Caco-2 (cell line): ENCODE measurements at regions of chr1 and their contacts with region 1.

Region 1: DNA sequence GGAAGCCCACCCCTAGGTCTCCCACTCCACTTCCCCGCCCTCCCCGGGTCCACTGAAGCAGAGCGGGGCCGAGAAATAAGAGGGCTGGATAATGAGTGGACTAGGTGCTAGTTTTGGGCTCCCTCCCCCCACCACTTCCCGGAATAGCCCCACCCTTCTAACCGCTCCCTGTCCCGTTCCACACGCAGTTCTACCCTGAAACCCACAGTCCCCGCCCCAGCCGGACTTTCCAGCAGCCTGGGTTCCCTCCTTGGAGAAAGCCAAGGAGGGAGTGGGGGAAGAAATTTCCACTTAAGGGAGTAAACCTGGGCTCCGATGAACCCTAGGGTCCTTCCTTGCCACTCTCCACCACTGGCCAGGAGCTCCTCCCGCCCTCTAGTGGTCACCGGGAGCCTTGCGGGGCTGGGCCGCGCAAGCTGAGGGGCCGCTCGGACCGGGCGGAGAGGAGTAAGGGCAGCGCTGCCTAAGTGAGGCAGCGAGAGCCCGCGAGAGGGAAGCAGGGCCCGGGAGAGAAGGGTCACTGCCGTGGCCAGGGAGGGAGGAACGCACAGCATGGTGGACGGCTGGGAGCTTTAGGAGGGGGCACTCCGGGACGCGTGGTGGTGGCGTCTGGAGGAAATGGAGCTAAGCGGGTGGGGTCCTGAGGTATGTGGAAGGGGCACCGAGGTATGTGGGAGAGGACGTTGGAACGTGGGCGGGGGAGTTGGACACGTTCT is 14.3 kb downstream of the THBS3 start:
- DNase-seq: peak; percentile 91 to 96
- H3K4me3 ChIP-seq: peak overlapping the region; percentile 81
- H3K4me3 Mint-ChIP-seq: peak overlapping the region; percentile 98
- H3K27ac Mint-ChIP-seq: peak overlapping the region; percentile 98
- H3K4me1 ChIP-seq: peaks cover 4% of the 10 kb centered on the region; the same call in 1 of the 2 replicates
- H3K4me1 Mint-ChIP-seq: peaks cover 15% of the 10 kb centered on the region
- H3K27me3 ChIP-seq: no peaks in the 10 kb centered on the region
- H3K27me3 Mint-ChIP-seq: no peaks in the 10 kb centered on the region
- CTCF ChIP-seq: peak; percentile 97 to 99

Region 2: GRCh38 chr1:154442006-154442740 is 751.3 kb before region 1 on chr1:
- CTCF ChIA-PET with region 1: no interaction called
- POLR2A ChIA-PET with region 1: no interaction called
- intact Hi-C with region 1: no loop called
- DNase-seq: peak in 1 of 2 experiments; percentile 15
- H3K4me3 ChIP-seq: no peak overlapping the region
- H3K4me3 Mint-ChIP-seq: no peak overlapping the region
- H3K27ac Mint-ChIP-seq: no peak overlapping the region
- H3K4me1 ChIP-seq: peaks cover 5% of the 10 kb centered on the region
- H3K4me1 Mint-ChIP-seq: peaks cover 7% of the 10 kb centered on the region
- H3K27me3 ChIP-seq: no peaks in the 10 kb centered on the region
- H3K27me3 Mint-ChIP-seq: no peaks in the 10 kb centered on the region
- CTCF ChIP-seq: peak; percentile 33 to 39

Region 3: DNA sequence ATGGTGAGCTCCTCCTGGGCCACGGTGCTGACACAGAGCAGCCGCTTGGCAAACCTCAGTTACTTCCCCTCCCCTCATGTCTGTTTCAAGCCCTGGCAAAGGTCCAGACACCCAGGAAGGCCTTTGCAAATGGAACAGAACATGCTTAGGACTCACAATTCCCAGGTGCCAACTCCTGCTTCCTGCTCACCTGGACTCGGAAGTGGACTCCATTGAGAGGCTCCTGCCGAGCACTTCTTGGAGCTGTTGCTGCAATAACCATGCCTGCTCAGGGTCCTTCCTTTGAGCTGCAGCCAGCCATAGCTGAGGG is 170.6 kb before region 1 on chr1:
- CTCF ChIA-PET with region 1: no interaction called
- POLR2A ChIA-PET with region 1: no interaction called
- intact Hi-C with region 1: no loop called
- DNase-seq: no peak
- H3K4me3 ChIP-seq: no peak overlapping the region
- H3K4me3 Mint-ChIP-seq: no peak overlapping the region
- H3K27ac Mint-ChIP-seq: no peak overlapping the region
- H3K4me1 ChIP-seq: peaks cover 12% of the 10 kb centered on the region
- H3K4me1 Mint-ChIP-seq: peaks cover 32% of the 10 kb centered on the region
- H3K27me3 ChIP-seq: no peaks in the 10 kb centered on the region
- H3K27me3 Mint-ChIP-seq: no peaks in the 10 kb centered on the region
- CTCF ChIP-seq: no peak

Region 4: DNA sequence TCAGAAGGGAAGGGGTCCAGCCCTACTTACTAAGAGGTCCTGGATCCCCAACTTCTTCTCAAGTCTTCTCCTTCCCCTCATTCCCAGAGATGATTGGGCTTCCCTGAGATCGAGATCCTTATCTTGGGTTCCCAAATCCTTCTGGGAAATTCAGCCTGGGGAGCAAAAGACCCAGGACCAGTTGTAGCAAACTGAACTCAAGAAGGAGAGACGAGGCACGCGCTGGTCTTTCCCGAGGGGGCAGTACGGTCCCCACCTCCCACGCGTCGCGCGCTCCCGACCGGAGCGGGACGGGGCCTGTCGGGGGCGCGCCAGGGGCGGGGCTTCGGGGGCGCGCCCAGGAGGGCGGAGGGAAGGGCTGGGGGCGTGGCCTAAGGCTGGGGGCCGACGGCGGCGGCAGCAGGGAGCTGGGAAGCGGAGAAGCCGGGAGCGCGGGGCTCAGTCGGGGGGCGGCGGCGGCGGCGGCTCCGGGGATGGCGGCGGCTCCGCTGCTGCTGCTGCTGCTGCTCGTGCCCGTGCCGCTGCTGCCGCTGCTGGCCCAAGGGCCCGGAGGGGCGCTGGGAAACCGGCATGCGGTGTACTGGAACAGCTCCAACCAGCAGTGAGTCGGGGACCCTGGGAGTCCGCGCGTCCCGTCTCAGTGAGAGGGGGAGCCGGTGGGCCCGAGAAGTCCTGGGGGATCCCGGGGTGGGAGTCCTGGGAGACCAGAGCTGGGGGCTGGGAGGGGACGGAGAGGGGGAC is 114.8 kb before region 1 on chr1 and contains the start of gene EFNA3:
- CTCF ChIA-PET with region 1: interaction called, 11 read pairs
- POLR2A ChIA-PET with region 1: interaction called, 5 read pairs
- intact Hi-C with region 1: no loop called
- DNase-seq: peak; percentile 65 to 85
- H3K4me3 ChIP-seq: peak within 1 kb of the TSS; percentile 50
- H3K4me3 Mint-ChIP-seq: peak within 1 kb of the TSS; percentile 77
- H3K27ac Mint-ChIP-seq: no peak within 1 kb of the TSS
- H3K4me1 ChIP-seq: peaks cover 34% of the 10 kb centered on the region
- H3K4me1 Mint-ChIP-seq: peaks cover 24% of the 10 kb centered on the region
- H3K27me3 ChIP-seq: peaks cover 5% of the 10 kb centered on the region; the same call in 1 of the 2 replicates
- H3K27me3 Mint-ChIP-seq: peaks cover 14% of the 10 kb centered on the region
- CTCF ChIP-seq: no peak
- total RNA-seq, gene EFNA3: 3.4 and 3.5 TPM in 2 replicates

Region 5: DNA sequence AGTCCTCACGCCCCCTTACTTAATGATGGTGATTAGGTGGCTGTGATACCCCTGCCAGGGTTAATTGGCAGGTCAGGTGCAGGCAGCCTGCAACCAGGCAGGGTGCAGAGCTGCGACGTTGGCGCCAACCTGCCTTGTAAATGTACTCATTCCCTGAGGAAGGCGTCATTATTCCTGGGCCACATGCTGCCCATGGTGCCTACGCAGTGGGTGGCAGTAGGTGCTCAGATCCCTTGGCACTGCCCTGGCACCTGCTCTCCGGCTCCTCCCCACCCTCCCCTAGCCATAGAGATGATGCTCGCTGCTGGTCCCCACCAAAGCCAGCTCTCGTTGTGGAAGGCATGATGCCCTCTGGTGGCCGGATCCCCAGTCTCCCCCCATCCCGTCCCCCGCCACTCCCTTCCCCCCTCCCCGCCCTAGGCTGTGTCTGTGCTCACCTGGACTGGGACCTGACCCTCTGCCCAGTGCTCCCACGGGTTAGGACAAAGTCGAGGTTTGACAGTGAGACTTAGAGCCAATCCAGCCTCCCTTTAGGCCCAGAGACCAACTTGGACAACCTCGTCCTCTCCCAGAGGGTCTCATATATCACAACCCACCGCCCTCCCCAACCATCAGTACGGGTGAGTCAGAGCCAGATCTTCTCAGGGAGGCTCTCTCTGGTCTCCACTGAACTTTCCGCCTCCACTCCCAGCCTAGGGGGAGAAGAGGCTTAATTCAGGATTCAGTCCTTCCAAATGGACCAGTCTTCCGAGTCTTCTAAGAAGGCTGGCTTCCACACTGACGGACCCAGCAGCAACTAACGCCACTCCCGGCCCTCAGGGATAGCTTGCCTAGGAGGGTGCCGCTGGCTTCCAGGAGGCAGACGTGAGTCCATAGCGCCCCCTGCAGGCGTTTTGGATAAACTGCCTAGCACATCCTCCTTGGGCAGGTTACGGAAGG is 26.0 kb before region 1 on chr1:
- CTCF ChIA-PET with region 1: interaction called, 77 read pairs
- POLR2A ChIA-PET with region 1: interaction called, 15 read pairs
- intact Hi-C with region 1: no loop called
- DNase-seq: peak; percentile 86 to 89
- H3K4me3 ChIP-seq: peak overlapping the region; percentile 23
- H3K4me3 Mint-ChIP-seq: peak overlapping the region; percentile 66
- H3K27ac Mint-ChIP-seq: peak overlapping the region; percentile 24
- H3K4me1 ChIP-seq: peaks cover 10% of the 10 kb centered on the region; the same call in 1 of the 2 replicates
- H3K4me1 Mint-ChIP-seq: no peaks in the 10 kb centered on the region
- H3K27me3 ChIP-seq: no peaks in the 10 kb centered on the region
- H3K27me3 Mint-ChIP-seq: no peaks in the 10 kb centered on the region
- CTCF ChIP-seq: peak; percentile 79 to 93

Region 6: DNA sequence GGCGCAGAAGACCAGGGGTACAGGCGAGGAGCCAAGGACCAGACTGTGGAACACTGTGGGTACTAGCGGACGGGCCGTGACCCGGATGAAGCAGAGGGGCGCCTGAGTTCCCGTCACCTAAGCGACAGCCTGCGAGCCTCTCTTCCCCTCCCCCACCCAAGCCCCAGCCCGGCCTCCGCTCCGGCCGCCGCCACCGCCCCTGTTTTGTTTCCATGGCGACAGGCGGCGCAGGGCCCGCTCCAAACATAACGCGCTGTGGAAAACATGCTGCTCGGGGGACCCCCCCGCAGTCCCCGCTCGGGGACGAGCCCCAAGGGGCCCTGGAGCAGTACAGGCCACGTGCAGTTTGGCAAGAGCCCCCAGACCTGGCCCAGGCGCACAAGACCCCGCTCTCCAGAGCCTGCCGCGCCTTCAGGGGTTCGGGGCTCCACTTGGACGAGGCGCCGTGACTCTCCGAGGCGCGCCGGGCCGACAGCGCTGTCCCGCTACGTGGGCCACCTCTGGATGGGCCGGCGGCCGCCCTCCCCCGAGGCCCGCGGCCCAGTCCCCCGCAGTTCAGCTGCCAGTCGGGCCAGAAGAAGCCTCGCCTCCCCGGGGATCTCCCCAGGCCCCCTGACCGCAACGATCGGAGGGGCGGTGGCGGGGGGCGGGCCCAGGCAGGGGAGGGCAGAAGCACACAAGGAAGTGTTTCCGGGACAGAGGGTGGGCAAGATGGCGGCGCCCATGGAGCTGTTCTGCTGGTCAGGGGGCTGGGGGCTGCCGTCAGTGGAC is 15.3 kb after region 1 on chr1 and contains the start of gene MTX1:
- CTCF ChIA-PET with region 1: interaction called, 9 read pairs
- POLR2A ChIA-PET with region 1: interaction called, 14 read pairs
- intact Hi-C with region 1: no loop called
- DNase-seq: peak; percentile 86
- H3K4me3 ChIP-seq: peak within 1 kb of the TSS; percentile 91
- H3K4me3 Mint-ChIP-seq: peak within 1 kb of the TSS; percentile 80
- H3K27ac Mint-ChIP-seq: peak within 1 kb of the TSS; percentile 93
- H3K4me1 ChIP-seq: peaks cover 15% of the 10 kb centered on the region
- H3K4me1 Mint-ChIP-seq: peaks cover 16% of the 10 kb centered on the region
- H3K27me3 ChIP-seq: no peaks in the 10 kb centered on the region
- H3K27me3 Mint-ChIP-seq: no peaks in the 10 kb centered on the region
- CTCF ChIP-seq: no peak
- total RNA-seq, gene MTX1: 64.9 and 65.3 TPM in 2 replicates

Region 7: GRCh38 chr1:155244368-155245162 is 51.1 kb after region 1 on chr1:
- CTCF ChIA-PET with region 1: interaction called, 9 read pairs
- POLR2A ChIA-PET with region 1: no interaction called
- intact Hi-C with region 1: loop called (anchors 5 kb)
- DNase-seq: peak; percentile 98 to 99
- H3K4me3 ChIP-seq: peak overlapping the region; percentile 70
- H3K4me3 Mint-ChIP-seq: peak overlapping the region; percentile 70
- H3K27ac Mint-ChIP-seq: peak overlapping the region; percentile 71
- H3K4me1 ChIP-seq: peaks cover 6% of the 10 kb centered on the region; the same call in 1 of the 2 replicates
- H3K4me1 Mint-ChIP-seq: peaks cover 24% of the 10 kb centered on the region
- H3K27me3 ChIP-seq: no peaks in the 10 kb centered on the region
- H3K27me3 Mint-ChIP-seq: peaks cover 3% of the 10 kb centered on the region
- CTCF ChIP-seq: no peak